Posterior cingulate gyrus (tissue), 11 donors: ENCODE measurements at regions of chr1 and their contacts with region 1.

Region 1: DNA sequence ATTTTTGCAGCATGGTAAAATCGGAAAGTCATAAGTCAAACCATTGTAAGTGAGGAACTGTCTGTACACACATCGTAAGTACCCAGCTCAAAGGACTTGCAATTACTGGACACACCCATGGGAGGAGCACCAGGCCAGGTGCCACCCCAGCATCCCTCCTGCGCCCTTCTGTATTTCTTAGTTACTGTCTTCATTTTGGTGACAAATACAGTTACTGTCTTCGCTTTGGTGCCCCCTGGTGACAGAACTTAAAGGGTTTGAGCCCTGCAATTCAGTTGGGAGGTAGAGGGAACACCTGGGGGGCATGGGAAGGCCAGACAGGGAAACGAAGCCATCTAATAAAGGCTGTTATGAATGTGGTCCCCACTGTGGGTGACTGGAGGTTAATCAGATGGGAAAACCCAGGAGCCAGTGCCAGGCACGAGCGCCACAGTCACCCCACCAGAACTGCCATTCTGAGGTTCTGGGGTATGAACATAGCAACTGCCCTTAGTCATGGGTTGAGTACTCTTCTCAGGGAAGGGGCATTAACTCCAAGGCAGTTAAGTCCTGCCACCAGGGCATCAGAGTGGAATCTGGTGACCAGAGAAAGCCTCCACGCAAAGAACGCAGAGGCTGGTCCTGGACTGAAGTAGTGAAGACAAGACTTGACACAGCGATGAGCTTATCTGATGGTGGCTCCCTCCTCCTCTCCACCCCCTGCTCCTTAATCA is 612.9 kb downstream of the PTPRU start:
- DNase-seq: peak in 2 of 10 donors; percentile 21 to 40

Region 2: GRCh38 chr1:29513357-29513756 is 335.8 kb before region 1 on chr1:
- intact Hi-C with region 1: loop called (anchors 5 kb)
- DNase-seq: peak in 5 of 10 donors; percentile 26 to 91 (median 51)